Natural killer cell (primary cell): ENCODE measurements at regions of chr6 and their contacts with region 1.

Region 1: DNA sequence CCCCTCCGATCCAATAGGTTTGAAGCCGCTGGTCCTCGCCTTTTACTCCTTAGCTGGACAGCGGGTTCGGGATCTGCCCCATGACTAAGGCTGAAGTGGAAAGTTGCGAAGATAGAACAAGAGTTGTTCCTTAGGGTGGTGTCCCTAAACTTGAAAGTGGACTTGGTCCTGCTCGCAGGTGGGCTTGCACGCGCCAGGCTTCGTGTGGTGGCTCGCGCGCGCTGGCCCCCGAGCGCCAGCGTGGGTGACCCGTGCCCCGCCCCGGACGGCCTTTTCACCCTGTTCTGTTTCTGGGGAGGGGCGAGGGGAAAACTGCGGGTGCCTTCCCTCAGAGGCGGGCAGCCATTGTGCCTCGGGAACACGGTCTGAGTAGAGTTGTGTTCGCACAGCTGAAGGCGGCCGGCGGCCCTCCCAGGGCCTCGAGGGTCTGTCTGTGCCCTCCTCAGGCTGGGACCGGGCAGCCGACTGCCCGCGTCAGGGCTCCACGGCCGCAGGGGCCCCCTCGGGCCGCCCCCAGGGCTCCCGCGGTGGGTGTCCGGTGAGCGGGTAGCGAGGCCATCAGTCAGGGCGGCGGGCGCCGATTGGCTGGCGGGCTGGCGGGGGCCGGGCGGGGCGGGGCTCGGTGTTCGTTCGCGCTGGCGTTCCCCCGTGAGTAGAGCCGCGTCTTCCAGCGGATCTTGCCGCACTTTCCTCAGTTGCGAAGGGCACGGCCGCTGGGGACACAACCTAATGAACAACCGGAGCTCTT is 33.0 kb downstream of the RREB1 start:
- DNase-seq: peak; percentile 84 to 85
- ATAC-seq: peak; percentile 93 to 96 (median 96)
- H3K4me3 ChIP-seq: peak overlapping the region; percentile 64
- H3K4me3 Mint-ChIP-seq: peak overlapping the region; percentile 89
- H3K27ac ChIP-seq: peak overlapping the region; percentile 72
- H3K27ac Mint-ChIP-seq: peak overlapping the region; percentile 70 to 85
- H3K4me1 ChIP-seq: peaks cover 31% of the 10 kb centered on the region
- H3K4me1 Mint-ChIP-seq: peaks cover 47 to 52% of the 10 kb centered on the region in 2 donors
- H3K27me3 ChIP-seq: no peaks in the 10 kb centered on the region
- H3K27me3 Mint-ChIP-seq: no peaks in the 10 kb centered on the region
- CTCF ChIP-seq: no peak

Region 2: GRCh38 chr6:7154341-7155139 is 13.7 kb after region 1 on chr6:
- intact Hi-C with region 1: loop called (anchors 2 kb)
- DNase-seq: peak; percentile 31 to 44
- ATAC-seq: peak; percentile 75 to 85 (median 77)
- H3K4me3 ChIP-seq: no peak overlapping the region
- H3K4me3 Mint-ChIP-seq: peak overlapping the region; percentile 43
- H3K27ac ChIP-seq: peak overlapping the region; percentile 68
- H3K27ac Mint-ChIP-seq: peak overlapping the region; percentile 86 to 90
- H3K4me1 ChIP-seq: peaks cover 35% of the 10 kb centered on the region
- H3K4me1 Mint-ChIP-seq: peaks cover 83 to 87% of the 10 kb centered on the region in 2 donors
- H3K27me3 ChIP-seq: no peaks in the 10 kb centered on the region
- H3K27me3 Mint-ChIP-seq: no peaks in the 10 kb centered on the region
- CTCF ChIP-seq: no peak